Lower leg skin (tissue), 4 donors: ENCODE measurements at regions of chr1 and their contacts with region 1.

Region 1: GRCh38 chr1:67005068-67005467 is 48.9 kb downstream of the SLC35D1 start:
- DNase-seq: no peak
- H3K4me3 ChIP-seq: no peak overlapping the region
- CTCF ChIP-seq: no peak
- POLR2A ChIP-seq: no peak

Region 2: GRCh38 chr1:65924471-65924870 is 1080.6 kb before region 1 on chr1:
- intact Hi-C with region 1: loop called (anchors 5 kb)
- DNase-seq: no peak
- H3K4me3 ChIP-seq: no peak overlapping the region
- CTCF ChIP-seq: no peak
- POLR2A ChIP-seq: no peak